Dorsolateral prefrontal cortex (tissue), 120 donors: ENCODE measurements at regions of chr2 and their contacts with region 1.

Region 1: GRCh38 chr2:16507655-16508489 is 157.8 kb downstream of the CYRIA start:
- DNase-seq: peak in 8 of 10 donors; percentile 20 to 79 (median 50)
- H3K4me3 ChIP-seq: peak overlapping the region; percentile 44 to 76 (median 65)
- H3K27ac ChIP-seq: peak overlapping the region in 1 of 59 donors; percentile 34
- H3K27me3 ChIP-seq: peaks cover 0 to 7% (median 0%) of the 10 kb centered on the region in 45 donors
- CTCF ChIP-seq: peak in 55 of 56 donors; percentile 47 to 92 (median 75)

Region 2: GRCh38 chr2:16281451-16282336 is 226.2 kb before region 1 on chr2:
- intact Hi-C with region 1: loop called in 1 of 2 experiments (anchors 10 kb)
- DNase-seq: peak in 5 of 10 donors; percentile 6 to 57 (median 38)
- H3K4me3 ChIP-seq: no peak overlapping the region
- H3K27ac ChIP-seq: no peak overlapping the region
- H3K27me3 ChIP-seq: no peaks in the 10 kb centered on the region
- CTCF ChIP-seq: peak; percentile 26 to 84 (median 68)